Gastrocnemius medialis (tissue), 4 donors: ENCODE measurements at regions of chr3 and their contacts with region 1.

Region 1: DNA sequence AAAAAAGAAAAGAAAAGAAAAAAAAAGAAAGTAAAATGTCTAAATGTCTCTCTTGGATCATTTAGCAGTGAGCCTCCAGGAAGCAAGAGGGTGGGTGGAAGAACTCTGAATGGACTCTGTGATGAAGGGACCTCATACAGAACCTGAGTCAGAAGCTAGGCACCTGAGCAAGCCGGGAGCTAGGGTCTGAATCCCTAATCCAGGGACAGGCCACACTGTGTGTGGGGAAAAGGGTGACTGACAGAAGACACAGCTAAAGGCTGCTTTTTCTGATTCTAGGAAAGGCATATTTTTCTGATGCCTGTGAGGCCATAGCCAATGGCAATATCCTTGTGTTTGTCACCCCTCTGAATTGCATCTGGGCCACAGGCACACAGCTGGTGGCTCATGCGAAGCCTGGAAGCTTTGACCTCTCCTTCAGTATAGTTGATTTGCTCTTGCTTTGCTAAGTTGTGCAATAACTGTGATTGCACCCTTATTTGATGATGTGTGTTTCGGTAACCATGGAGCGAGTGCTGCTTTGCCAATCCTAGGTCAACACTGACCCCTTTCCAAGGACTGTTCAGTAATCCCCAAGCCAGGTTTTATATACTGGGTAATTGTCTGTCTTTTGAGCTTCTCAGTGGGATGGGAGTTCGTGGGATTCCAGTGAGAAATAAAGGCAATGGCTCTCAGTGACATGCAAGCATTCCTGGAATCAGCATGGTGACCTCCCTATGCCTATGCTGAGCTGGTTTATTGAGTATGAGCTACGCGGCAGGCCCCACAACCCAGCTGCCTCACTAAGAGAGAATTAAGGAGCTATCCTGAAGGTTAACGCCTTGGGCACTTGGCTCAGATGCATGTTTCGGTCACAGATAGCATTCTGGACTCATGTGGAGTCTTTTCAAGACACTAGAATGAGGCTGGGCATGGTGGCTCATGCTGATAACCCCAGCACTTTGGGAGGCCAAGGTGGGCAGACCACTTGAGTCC is 49.0 kb upstream of the OSBPL11 start:
- DNase-seq: peak; percentile 48 to 70
- ATAC-seq: peak; percentile 79 to 87
- H3K4me3 ChIP-seq: no peak overlapping the region
- H3K27ac ChIP-seq: peak overlapping the region; percentile 82 to 90 (median 84)
- H3K4me1 ChIP-seq: peaks cover 18 to 30% of the 10 kb centered on the region in 2 donors
- H3K27me3 ChIP-seq: no peaks in the 10 kb centered on the region
- CTCF ChIP-seq: no peak
- POLR2A ChIP-seq: peak; percentile 44 to 46

Region 2: GRCh38 chr3:125528920-125529319 is 115.4 kb before region 1 on chr3:
- in situ Hi-C with region 1: no loop called
- intact Hi-C with region 1: no loop called
- DNase-seq: no peak
- ATAC-seq: no peak
- H3K4me3 ChIP-seq: no peak overlapping the region
- H3K27ac ChIP-seq: no peak overlapping the region
- H3K4me1 ChIP-seq: peaks cover 0 to 6% of the 10 kb centered on the region in 2 donors
- H3K27me3 ChIP-seq: no peaks in the 10 kb centered on the region
- CTCF ChIP-seq: no peak
- POLR2A ChIP-seq: no peak

Region 3: GRCh38 chr3:125594581-125595011 is 49.7 kb before region 1 on chr3:
- in situ Hi-C with region 1: loop called in 1 of 4 experiments (anchors 5 kb)
- intact Hi-C with region 1: loop called (anchors 2 kb)
- DNase-seq: peak in 1 of 2 donors; percentile 26
- ATAC-seq: peak; percentile 32 to 35
- H3K4me3 ChIP-seq: peak overlapping the region; percentile 71 to 89 (median 84)
- H3K27ac ChIP-seq: peak overlapping the region; percentile 91 to 98 (median 94)
- H3K4me1 ChIP-seq: peaks cover 29 to 43% of the 10 kb centered on the region in 2 donors
- H3K27me3 ChIP-seq: no peaks in the 10 kb centered on the region
- CTCF ChIP-seq: no peak
- POLR2A ChIP-seq: no peak